Keratinocyte (primary cell): ENCODE measurements at regions of chr10 and their contacts with region 1.

Region 1: DNA sequence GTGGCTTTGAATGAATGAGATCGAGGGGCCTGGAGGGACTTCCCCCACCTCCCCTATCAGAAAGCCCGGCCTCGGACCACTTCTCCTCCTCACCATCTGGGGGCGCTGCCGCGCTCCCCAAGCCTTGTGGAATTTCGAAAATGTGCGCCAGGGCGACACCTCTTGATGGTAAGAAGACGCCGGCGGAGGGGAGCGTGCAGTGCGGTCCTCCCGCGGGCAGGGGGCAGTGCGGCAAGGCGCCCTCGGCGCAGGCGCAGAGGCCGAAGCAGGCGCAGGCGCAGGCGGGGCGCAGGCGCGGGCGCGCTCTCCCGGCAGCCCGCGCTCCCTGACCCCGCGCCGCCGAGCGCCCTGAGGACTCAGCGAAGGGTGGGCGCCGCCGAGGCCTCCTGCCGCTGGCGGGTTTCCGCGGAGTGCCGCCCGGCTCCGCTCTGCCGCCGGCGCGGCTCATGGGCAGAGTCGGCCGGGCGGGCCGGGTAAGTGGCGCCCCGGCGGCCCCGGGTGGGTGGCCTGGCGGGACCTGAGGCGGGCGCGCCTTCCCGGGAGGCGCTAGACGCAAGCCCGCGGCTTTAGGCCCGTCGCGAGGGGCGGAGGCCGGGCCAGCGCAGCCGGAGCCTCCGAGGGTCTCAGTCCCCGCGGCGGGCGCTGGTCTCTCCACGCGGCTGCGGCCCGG is at the start of gene RBM17:
- DNase-seq: peak; percentile 78
- H3K4me3 ChIP-seq: peak within 1 kb of the TSS; percentile 80 to 84 (median 84)
- H3K27ac ChIP-seq: peak within 1 kb of the TSS; percentile 83
- H3K4me1 ChIP-seq: peaks cover 17% of the 10 kb centered on the region
- H3K27me3 ChIP-seq: no peaks in the 10 kb centered on the region
- CTCF ChIP-seq: peak; percentile 100
- polyA plus RNA-seq, gene RBM17: 30.0 to 54.8 TPM (median 35.0 TPM) in 3 replicates

Region 2: DNA sequence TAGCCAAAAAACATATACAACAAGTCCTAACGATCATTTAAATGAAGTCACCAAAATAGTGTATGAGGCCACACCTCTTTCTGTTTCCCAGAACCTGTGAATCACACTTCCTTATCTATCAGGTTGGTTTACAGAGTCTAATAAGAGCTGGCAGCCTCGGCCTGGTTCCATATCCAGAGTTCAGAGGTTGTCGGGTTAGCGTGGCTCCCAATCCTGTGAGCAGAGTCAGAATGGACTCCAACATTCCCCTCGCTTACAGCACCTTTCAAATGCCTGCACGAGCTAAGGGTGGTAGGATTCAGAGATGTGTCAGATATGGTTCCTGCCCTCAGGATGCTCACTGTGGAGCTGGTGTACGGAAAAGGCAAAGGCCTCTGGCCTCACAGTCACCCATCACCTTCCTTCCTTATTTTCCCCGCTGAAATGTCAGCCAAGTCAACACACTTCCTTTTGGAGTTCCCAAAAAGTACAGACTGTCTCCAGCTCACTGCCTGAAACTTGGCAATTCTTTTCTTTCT is 117.5 kb before region 1 on chr10:
- dilution Hi-C with region 1: loop called (anchors 25 kb)
- DNase-seq: no peak
- H3K4me3 ChIP-seq: no peak overlapping the region
- H3K27ac ChIP-seq: peak overlapping the region; percentile 15
- H3K4me1 ChIP-seq: peaks cover 12% of the 10 kb centered on the region
- H3K27me3 ChIP-seq: no peaks in the 10 kb centered on the region
- CTCF ChIP-seq: no peak